Astrocyte of the cerebellum (primary cell): ENCODE measurements at regions of chr6 and their contacts with region 1.

Region 1: GRCh38 chr6:2783188-2783963 is 18.2 kb downstream of the WRNIP1 start:
- DNase-seq: no peak
- H3K4me3 ChIP-seq: no peak overlapping the region
- CTCF ChIP-seq: peak; percentile 6

Region 2: GRCh38 chr6:2921520-2922115 is 138.2 kb after region 1 on chr6:
- in situ Hi-C with region 1: loop called (anchors 10 kb)
- DNase-seq: no peak
- H3K4me3 ChIP-seq: no peak overlapping the region
- CTCF ChIP-seq: no peak